ENCODE measurements at regions of chr1 and their contacts with region 1.

Region 1: GRCh38 chr1:83942914-83943313 is 56.0 kb downstream of the TTLL7 start:
- DNase-seq: no peak
- CTCF ChIP-seq: no peak

Region 2: GRCh38 chr1:83931658-83932253 is 11.2 kb before region 1 on chr1:
- CTCF ChIA-PET with region 1: interaction called, 13 read pairs
- POLR2A ChIA-PET with region 1: no interaction called
- DNase-seq: peak; percentile 37
- CTCF ChIP-seq: peak; percentile 55